ENCODE measurements at regions of chr1 and their contacts with region 1.

Region 1: GRCh38 chr1:160291248-160292220 is 6.6 kb upstream of the PEX19 start:
- DNase-seq: peak; percentile 75 to 79 (median 76)
- H3K4me3 ChIP-seq: no peak overlapping the region
- H3K4me3 Mint-ChIP-seq: no peak overlapping the region
- H3K27ac ChIP-seq: no peak overlapping the region
- H3K27ac Mint-ChIP-seq: peak overlapping the region; percentile 0 to 90 (median 77)
- H3K4me1 ChIP-seq: no peaks in the 10 kb centered on the region
- H3K4me1 Mint-ChIP-seq: peaks cover 4 to 10% (median 4%) of the 10 kb centered on the region in 4 donors
- H3K27me3 ChIP-seq: no peaks in the 10 kb centered on the region
- H3K27me3 Mint-ChIP-seq: no peaks in the 10 kb centered on the region

Region 2: DNA sequence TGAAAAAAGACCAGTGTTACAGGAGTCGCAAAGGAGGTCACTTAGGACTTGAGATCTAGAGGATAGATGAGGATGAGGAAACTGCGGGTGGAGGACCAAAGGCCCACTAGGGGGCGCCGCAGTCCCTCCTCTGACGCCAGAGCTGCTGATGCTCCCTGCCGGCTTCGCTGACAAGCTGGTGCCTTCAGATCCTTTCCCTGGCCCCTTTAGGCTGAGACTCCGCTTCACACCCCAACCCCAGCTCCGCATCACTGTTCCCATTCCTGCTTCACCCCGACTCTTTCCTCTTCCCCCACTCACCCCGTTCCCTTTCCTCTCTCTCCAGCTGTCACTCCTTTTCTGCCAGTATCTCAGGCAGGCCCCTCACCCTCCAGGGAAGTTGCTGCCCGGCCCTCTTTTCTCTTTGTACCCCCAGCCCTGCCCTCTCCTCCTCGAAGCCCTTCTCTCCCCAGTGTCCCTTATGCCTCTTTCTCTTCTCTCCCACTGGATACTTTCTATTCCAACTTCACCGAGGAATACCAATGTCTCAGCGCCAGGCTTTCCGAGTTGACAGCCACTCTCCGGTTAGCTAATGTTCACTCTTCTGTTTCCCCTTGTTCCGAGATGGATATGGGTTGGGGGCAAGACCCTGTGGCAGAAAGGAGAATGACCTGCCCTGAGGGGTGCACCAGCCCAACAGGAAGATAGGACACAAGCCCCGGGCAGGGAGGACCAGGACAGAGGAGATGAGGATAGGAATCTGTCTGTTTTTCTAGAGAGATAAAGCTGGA is 205.7 kb before region 1 on chr1:
- CTCF ChIA-PET with region 1: interaction called, 23 read pairs
- POLR2A ChIA-PET with region 1: no interaction called
- intact Hi-C with region 1: no loop called
- DNase-seq: peak; percentile 66 to 68 (median 67)
- H3K4me3 ChIP-seq: no peak overlapping the region
- H3K4me3 Mint-ChIP-seq: peak overlapping the region in 3 of 8 donors; percentile 6 to 70 (median 45)
- H3K27ac ChIP-seq: no peak overlapping the region
- H3K27ac Mint-ChIP-seq: peak overlapping the region in 6 of 7 donors; percentile 51 to 88 (median 78)
- H3K4me1 ChIP-seq: peaks cover 3% of the 10 kb centered on the region
- H3K4me1 Mint-ChIP-seq: peaks cover 8 to 28% (median 19%) of the 10 kb centered on the region in 4 donors
- H3K27me3 ChIP-seq: peaks cover 18% of the 10 kb centered on the region
- H3K27me3 Mint-ChIP-seq: peaks cover 16 to 18% of the 10 kb centered on the region in 2 donors

Region 3: DNA sequence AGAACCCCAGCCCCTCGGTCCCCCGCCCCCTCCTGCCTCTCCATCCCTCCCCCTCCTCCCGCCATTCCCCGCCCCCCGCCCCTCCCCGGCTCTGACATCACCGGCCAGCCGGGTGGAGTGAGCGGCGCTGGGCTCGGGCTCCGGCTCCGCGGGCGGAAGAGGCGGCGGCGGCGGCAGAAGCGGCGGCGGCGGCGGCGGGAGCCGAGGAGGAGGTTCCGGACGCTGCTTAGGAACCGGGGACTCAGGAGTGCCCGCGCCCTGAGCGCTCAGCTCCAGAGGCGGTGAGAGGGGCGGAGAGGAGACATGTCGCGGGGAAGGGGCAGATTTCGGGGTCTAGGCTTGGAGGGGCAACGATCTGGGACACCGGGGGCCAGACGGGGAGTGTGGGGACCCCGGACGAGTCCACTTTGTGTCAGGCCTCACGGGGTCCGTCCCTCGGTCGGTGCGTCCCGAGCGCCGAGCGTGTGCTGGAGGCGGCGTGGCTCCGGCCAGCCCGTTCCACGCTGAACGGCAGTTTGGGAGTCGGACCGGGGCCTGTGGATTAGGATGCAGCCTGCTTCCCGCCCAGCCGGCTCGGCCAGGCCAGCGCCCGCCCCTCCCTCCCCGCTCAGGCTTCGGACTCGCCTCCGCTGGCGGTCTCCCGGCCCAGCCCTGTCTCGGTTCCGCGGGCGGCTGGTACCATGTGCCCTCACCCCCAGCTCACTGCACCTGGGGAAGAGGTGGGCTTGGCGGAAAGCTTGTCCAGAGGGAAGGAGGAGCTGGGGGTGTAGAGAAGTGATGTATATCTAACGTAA is 86.1 kb before region 1 on chr1 and contains the start of gene PEA15:
- CTCF ChIA-PET with region 1: interaction called, 20 read pairs
- POLR2A ChIA-PET with region 1: interaction called, 3 read pairs
- intact Hi-C with region 1: loop called (anchors 5 kb)
- DNase-seq: peak; percentile 59 to 68 (median 62)
- H3K4me3 ChIP-seq: peak within 1 kb of the TSS; percentile 31 to 88
- H3K4me3 Mint-ChIP-seq: peak within 1 kb of the TSS; percentile 88 to 96 (median 92)
- H3K27ac ChIP-seq: peak within 1 kb of the TSS; percentile 77
- H3K27ac Mint-ChIP-seq: peak within 1 kb of the TSS; percentile 88 to 98 (median 94)
- H3K4me1 ChIP-seq: peaks cover 30% of the 10 kb centered on the region
- H3K4me1 Mint-ChIP-seq: peaks cover 29 to 48% (median 40%) of the 10 kb centered on the region in 4 donors
- H3K27me3 ChIP-seq: no peaks in the 10 kb centered on the region
- H3K27me3 Mint-ChIP-seq: no peaks in the 10 kb centered on the region
- total RNA-seq, gene PEA15: 23.1 to 25.1 TPM

Region 4: GRCh38 chr1:160232911-160233310 is 58.6 kb before region 1 on chr1:
- CTCF ChIA-PET with region 1: interaction called, 26 read pairs
- POLR2A ChIA-PET with region 1: interaction called, 3 read pairs
- intact Hi-C with region 1: no loop called
- DNase-seq: peak in 3 of 5 donors; percentile 5 to 12 (median 6)
- H3K4me3 ChIP-seq: no peak overlapping the region
- H3K4me3 Mint-ChIP-seq: no peak overlapping the region
- H3K27ac ChIP-seq: no peak overlapping the region
- H3K27ac Mint-ChIP-seq: peak overlapping the region in 5 of 7 donors; percentile 10 to 65 (median 49)
- H3K4me1 ChIP-seq: peaks cover 6% of the 10 kb centered on the region
- H3K4me1 Mint-ChIP-seq: peaks cover 10 to 14% (median 12%) of the 10 kb centered on the region in 4 donors
- H3K27me3 ChIP-seq: no peaks in the 10 kb centered on the region
- H3K27me3 Mint-ChIP-seq: no peaks in the 10 kb centered on the region

Region 5: DNA sequence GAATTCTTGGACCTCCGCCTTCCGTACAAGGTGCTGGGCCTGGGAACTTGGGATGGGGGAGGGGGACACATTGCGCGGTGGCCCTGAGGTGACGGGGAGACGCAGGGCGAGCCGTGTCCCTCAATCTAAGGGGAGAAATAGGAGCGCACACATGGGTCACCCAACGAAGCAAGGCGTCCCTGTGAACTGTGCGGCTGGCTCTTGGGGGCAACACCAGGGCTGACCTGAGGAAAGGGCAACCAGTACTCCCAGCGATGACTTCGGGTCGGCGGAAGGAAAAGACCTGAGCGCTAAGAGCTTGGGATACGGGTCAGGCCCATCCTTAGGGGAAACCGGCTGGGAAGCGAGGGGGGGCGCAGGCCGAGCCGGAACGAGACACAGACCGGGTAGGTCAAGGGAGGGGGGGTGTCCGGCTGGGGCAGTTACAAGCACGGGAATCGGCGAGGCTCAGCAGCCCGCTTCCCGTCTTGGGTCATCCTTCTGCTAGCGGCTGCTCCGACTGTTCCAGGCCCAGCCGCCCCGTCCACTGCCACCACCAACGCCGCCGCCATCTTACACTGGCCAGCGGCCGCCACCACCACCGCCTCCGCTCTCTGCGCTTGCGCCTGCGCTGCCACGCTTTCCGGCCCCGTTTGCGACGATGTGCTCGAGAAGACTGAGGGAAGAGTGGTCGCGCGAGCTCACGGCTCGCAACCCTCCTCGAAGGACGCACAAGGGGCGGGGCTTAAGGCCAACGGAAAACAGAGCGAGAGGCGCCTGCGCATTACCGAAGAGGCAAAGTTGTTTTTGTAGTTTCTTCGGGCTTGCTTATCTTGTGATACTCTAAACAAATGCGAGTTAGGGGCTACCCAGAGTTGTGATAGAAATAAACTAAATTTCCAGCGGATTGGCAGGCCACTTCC is 29.4 kb before region 1 on chr1 and contains the start of gene DCAF8:
- CTCF ChIA-PET with region 1: interaction called, 86 read pairs
- POLR2A ChIA-PET with region 1: interaction called, 90 read pairs
- intact Hi-C with region 1: no loop called
- DNase-seq: peak; percentile 96 to 98 (median 97)
- H3K4me3 ChIP-seq: peak within 1 kb of the TSS; percentile 84 to 91
- H3K4me3 Mint-ChIP-seq: peak within 1 kb of the TSS; percentile 93 to 100 (median 96)
- H3K27ac ChIP-seq: peak within 1 kb of the TSS; percentile 96
- H3K27ac Mint-ChIP-seq: peak within 1 kb of the TSS; percentile 96 to 100 (median 99)
- H3K4me1 ChIP-seq: peaks cover 42% of the 10 kb centered on the region
- H3K4me1 Mint-ChIP-seq: peaks cover 21 to 61% (median 44%) of the 10 kb centered on the region in 4 donors
- H3K27me3 ChIP-seq: no peaks in the 10 kb centered on the region
- H3K27me3 Mint-ChIP-seq: no peaks in the 10 kb centered on the region
- total RNA-seq, gene DCAF8: 211 to 223 TPM

Region 6: DNA sequence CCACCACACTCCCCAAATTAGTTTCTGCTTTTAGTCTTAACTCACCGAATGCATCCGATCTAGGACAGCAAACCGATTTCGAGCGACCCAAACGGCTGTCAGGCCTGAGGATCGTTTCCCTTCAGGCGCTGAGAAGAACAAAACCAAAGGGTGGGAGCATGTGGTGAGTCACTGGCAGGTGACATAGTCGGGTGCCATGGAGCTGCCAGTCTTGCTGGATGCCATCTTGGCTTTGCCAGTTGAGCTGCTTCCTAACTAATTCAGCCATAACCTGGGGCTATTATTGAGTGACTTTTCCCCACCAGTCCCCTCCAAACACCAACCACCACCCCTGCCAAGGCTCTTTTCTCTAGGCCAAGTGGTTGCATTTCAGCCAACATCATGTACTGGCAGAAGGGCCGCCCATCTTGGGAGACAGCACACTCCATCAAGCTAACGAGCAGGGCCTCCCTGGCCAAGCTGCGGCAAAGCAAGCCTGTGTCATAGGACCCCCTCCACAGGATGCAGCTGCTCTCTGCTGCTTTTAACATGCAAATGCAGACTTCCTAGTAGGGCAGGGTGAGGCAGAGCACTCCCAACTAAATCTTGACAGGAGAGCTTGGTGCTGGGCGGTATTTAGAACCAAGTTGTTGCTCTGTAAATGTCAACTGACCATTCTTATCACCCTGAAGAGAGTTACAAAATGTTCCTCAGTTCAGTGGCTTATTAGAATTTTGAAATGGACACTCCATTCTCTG is 15.8 kb after region 1 on chr1:
- CTCF ChIA-PET with region 1: interaction called, 22 read pairs
- POLR2A ChIA-PET with region 1: interaction called, 4 read pairs
- intact Hi-C with region 1: no loop called
- DNase-seq: no peak
- H3K4me3 ChIP-seq: no peak overlapping the region
- H3K4me3 Mint-ChIP-seq: no peak overlapping the region
- H3K27ac ChIP-seq: no peak overlapping the region
- H3K27ac Mint-ChIP-seq: peak overlapping the region in 1 of 7 donors; percentile 35
- H3K4me1 ChIP-seq: no peaks in the 10 kb centered on the region
- H3K4me1 Mint-ChIP-seq: peaks cover 0 to 4% (median under 1%) of the 10 kb centered on the region in 4 donors
- H3K27me3 ChIP-seq: no peaks in the 10 kb centered on the region
- H3K27me3 Mint-ChIP-seq: no peaks in the 10 kb centered on the region

Region 7: GRCh38 chr1:160376525-160377131 is 85.1 kb after region 1 on chr1:
- CTCF ChIA-PET with region 1: interaction called, 18 read pairs
- POLR2A ChIA-PET with region 1: no interaction called
- intact Hi-C with region 1: no loop called
- DNase-seq: peak in 4 of 5 donors; percentile 39 to 46 (median 44)
- H3K4me3 ChIP-seq: no peak overlapping the region
- H3K4me3 Mint-ChIP-seq: peak overlapping the region in 3 of 8 donors; percentile 17 to 62 (median 48)
- H3K27ac ChIP-seq: no peak overlapping the region
- H3K27ac Mint-ChIP-seq: peak overlapping the region in 1 of 7 donors; percentile 31
- H3K4me1 ChIP-seq: peaks cover 14% of the 10 kb centered on the region
- H3K4me1 Mint-ChIP-seq: peaks cover 9 to 16% (median 12%) of the 10 kb centered on the region in 4 donors
- H3K27me3 ChIP-seq: no peaks in the 10 kb centered on the region
- H3K27me3 Mint-ChIP-seq: peaks cover 0 to 1% of the 10 kb centered on the region in 2 donors

Measured in CD4-positive, alpha-beta memory T cell (primary cell).